PC-9 (cell line): ENCODE measurements at regions of chr20 and their contacts with region 1.

Region 1: GRCh38 chr20:63955827-63956663 is at the start of gene UCKL1:
- DNase-seq: peak; percentile 74 to 94
- H3K4me3 ChIP-seq: peak within 1 kb of the TSS; percentile 74
- H3K27ac ChIP-seq: peak within 1 kb of the TSS; percentile 65
- H3K4me1 ChIP-seq: peaks cover 26% of the 10 kb centered on the region; the same call in 1 of the 2 replicates
- H3K27me3 ChIP-seq: no peaks in the 10 kb centered on the region
- CTCF ChIP-seq: 0 out of 2 replicates have a peak, but pooled peaks have one; percentile 13
- total RNA-seq, gene UCKL1: 51.7 and 55.1 TPM in 2 replicates

Region 2: DNA sequence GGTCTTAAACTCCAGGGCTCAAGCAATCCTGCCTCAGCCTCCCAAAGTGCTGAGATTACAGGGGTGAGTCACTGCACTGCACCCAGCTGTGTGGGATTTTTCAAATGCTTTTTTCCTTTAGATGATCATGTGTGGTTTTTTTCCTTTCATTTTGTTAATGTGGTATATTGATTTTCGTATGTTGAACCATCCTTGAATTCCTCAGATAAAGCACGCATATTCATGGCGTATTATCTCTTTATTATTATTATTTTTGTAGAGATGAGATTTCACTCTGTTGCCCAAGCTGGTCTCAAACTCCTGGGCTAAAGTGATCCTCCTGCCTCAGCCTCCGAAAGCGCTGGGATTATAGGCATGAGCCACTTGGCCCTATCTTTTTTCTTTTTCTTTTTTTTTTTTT is 241.2 kb before region 1 on chr20:
- CTCF ChIA-PET with region 1: no interaction called
- POLR2A ChIA-PET with region 1: interaction called, 23 read pairs
- intact Hi-C with region 1: no loop called
- DNase-seq: peak in 1 of 2 experiments; percentile 19
- H3K4me3 ChIP-seq: no peak overlapping the region
- H3K27ac ChIP-seq: no peak overlapping the region
- H3K4me1 ChIP-seq: no peaks in the 10 kb centered on the region
- H3K27me3 ChIP-seq: no peaks in the 10 kb centered on the region
- CTCF ChIP-seq: no peak

Region 3: GRCh38 chr20:63819224-63819921 is 136.7 kb before region 1 on chr20:
- CTCF ChIA-PET with region 1: no interaction called
- POLR2A ChIA-PET with region 1: no interaction called
- intact Hi-C with region 1: no loop called
- DNase-seq: no peak
- H3K4me3 ChIP-seq: no peak overlapping the region
- H3K27ac ChIP-seq: no peak overlapping the region
- H3K4me1 ChIP-seq: no peaks in the 10 kb centered on the region
- H3K27me3 ChIP-seq: no peaks in the 10 kb centered on the region
- CTCF ChIP-seq: no peak

Region 4: GRCh38 chr20:63894358-63895201 is 61.5 kb before region 1 on chr20 and contains the start of gene DNAJC5:
- CTCF ChIA-PET with region 1: no interaction called
- POLR2A ChIA-PET with region 1: no interaction called
- intact Hi-C with region 1: loop called (anchors 5 kb)
- DNase-seq: peak; percentile 82 to 98
- H3K4me3 ChIP-seq: peak within 1 kb of the TSS; percentile 75
- H3K27ac ChIP-seq: peak within 1 kb of the TSS; percentile 68
- H3K4me1 ChIP-seq: peaks cover 40% of the 10 kb centered on the region
- H3K27me3 ChIP-seq: no peaks in the 10 kb centered on the region
- CTCF ChIP-seq: no peak
- total RNA-seq, gene DNAJC5: 47.0 and 48.1 TPM in 2 replicates

Region 5: GRCh38 chr20:64223526-64224067 is 267.6 kb after region 1 on chr20:
- CTCF ChIA-PET with region 1: no interaction called
- POLR2A ChIA-PET with region 1: no interaction called
- intact Hi-C with region 1: no loop called
- DNase-seq: no peak
- H3K4me3 ChIP-seq: no peak overlapping the region
- H3K27ac ChIP-seq: no peak overlapping the region
- H3K4me1 ChIP-seq: peaks cover 11% of the 10 kb centered on the region
- H3K27me3 ChIP-seq: peaks cover 62% of the 10 kb centered on the region
- CTCF ChIP-seq: no peak